CD4-positive, alpha-beta T cell (primary cell): ENCODE measurements at regions of chr20 and their contacts with region 1.

Region 1: DNA sequence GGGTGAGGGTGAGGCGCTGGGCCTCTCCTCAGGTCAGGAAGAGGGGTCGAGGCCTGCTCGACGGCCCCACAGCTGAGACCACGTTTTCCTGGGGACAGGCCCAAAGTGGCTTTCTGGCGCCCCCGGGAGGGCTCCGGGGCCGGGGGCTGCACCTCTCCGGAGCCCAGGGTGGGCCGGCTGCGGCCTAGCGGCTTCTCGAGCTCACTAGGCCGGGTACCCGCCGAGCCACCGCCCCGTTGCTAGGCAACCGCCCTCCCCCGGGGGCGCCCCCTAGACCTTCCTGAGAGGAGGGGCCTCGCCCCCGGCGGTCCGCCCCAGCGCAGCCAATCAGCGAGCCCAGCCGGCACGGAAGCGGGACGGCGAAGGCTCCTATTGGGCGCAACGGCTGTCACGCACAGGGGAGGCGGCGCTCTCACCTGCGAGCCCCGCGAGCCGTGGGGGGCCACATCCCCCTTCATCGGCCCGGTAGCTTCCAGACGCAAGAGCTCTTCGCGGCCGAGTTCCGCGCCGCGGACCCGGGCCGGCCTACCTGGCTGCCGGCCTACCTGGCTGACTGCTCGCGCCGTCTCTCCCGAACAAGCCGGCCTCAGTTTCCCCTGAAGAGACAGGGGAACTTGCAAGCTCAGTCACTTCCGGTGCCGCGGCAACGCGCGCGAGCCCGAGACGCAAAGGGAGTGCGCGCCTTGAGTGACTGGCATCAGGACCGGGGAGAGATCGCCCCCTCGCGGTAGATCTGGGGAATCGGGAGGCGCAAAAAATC is 831 bp upstream of the BCL2L1 start:
- DNase-seq: peak; percentile 91 to 99 (median 97)
- ATAC-seq: peak; percentile 92
- H3K4me3 ChIP-seq: peak overlapping the region; percentile 99
- H3K4me3 Mint-ChIP-seq: peak overlapping the region; percentile 97
- H3K27ac ChIP-seq: peak overlapping the region; percentile 92 to 96
- H3K27ac Mint-ChIP-seq: peak overlapping the region; percentile 87
- H3K4me1 ChIP-seq: peaks cover 44% of the 10 kb centered on the region
- H3K4me1 Mint-ChIP-seq: peaks cover 44% of the 10 kb centered on the region
- H3K27me3 ChIP-seq: no peaks in the 10 kb centered on the region
- H3K27me3 Mint-ChIP-seq: no peaks in the 10 kb centered on the region
- CTCF ChIP-seq: peak; percentile 85

Region 2: GRCh38 chr20:31514159-31515071 is 209.1 kb before region 1 on chr20 and contains the start of gene HM13:
- CTCF ChIA-PET with region 1: interaction called, 3 read pairs
- POLR2A ChIA-PET with region 1: no interaction called
- intact Hi-C with region 1: loop called in 1 of 2 experiments (anchors 2 kb)
- DNase-seq: peak; percentile 81 to 96 (median 86)
- ATAC-seq: peak; percentile 82
- H3K4me3 ChIP-seq: peak within 1 kb of the TSS; percentile 99
- H3K4me3 Mint-ChIP-seq: no peak within 1 kb of the TSS
- H3K27ac ChIP-seq: peak within 1 kb of the TSS; percentile 37 to 69
- H3K27ac Mint-ChIP-seq: no peak within 1 kb of the TSS
- H3K4me1 ChIP-seq: peaks cover 46% of the 10 kb centered on the region
- H3K4me1 Mint-ChIP-seq: peaks cover 7% of the 10 kb centered on the region
- H3K27me3 ChIP-seq: no peaks in the 10 kb centered on the region
- H3K27me3 Mint-ChIP-seq: no peaks in the 10 kb centered on the region
- CTCF ChIP-seq: peak; percentile 95
- total RNA-seq, gene HM13: 97.8 to 113 TPM

Region 3: GRCh38 chr20:31572701-31573554 is 150.6 kb before region 1 on chr20:
- CTCF ChIA-PET with region 1: interaction called, 4 read pairs
- POLR2A ChIA-PET with region 1: interaction called, 10 read pairs
- intact Hi-C with region 1: loop called in 1 of 2 experiments (anchors 5 kb)
- DNase-seq: peak; percentile 75 to 94 (median 85)
- ATAC-seq: peak; percentile 89
- H3K4me3 ChIP-seq: peak overlapping the region; percentile 74
- H3K4me3 Mint-ChIP-seq: peak overlapping the region; percentile 90
- H3K27ac ChIP-seq: peak overlapping the region; percentile 37 to 76
- H3K27ac Mint-ChIP-seq: peak overlapping the region; percentile 89
- H3K4me1 ChIP-seq: peaks cover 20% of the 10 kb centered on the region
- H3K4me1 Mint-ChIP-seq: peaks cover 26% of the 10 kb centered on the region
- H3K27me3 ChIP-seq: no peaks in the 10 kb centered on the region
- H3K27me3 Mint-ChIP-seq: no peaks in the 10 kb centered on the region
- CTCF ChIP-seq: no peak

Region 4: DNA sequence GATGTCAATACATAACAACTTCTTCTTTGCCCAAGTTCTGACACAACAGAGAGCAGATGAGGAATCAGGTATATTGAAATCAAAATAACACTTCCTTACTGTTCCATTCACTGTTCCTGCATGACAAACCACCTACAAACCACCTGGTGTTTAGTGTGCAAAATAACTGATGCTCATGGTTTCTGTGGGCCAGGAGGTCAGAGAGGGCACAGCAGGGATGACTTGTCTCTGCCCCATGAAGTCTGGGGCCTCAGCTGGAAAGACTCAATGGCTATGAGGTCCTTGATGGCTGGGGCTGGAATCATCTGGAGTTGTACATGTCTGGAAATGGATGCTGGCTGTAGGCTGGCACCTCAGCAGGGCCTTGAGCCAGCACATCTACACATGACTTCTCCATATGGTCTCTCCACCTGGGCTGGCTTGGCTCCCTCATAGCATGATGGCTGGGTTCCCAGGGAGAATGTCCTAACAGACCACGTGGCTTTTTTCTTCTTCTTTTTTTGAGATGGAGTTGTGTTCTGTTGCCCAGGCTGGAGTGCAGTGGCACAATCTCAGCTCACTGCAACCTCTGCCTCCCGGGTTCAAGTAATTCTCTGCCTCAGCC is 93.2 kb before region 1 on chr20:
- CTCF ChIA-PET with region 1: interaction called, 10 read pairs
- POLR2A ChIA-PET with region 1: interaction called, 5 read pairs
- intact Hi-C with region 1: loop called in 1 of 2 experiments (anchors 1 kb)
- DNase-seq: no peak
- ATAC-seq: no peak
- H3K4me3 ChIP-seq: no peak overlapping the region
- H3K4me3 Mint-ChIP-seq: no peak overlapping the region
- H3K27ac ChIP-seq: no peak overlapping the region
- H3K27ac Mint-ChIP-seq: no peak overlapping the region
- H3K4me1 ChIP-seq: peaks cover 2% of the 10 kb centered on the region
- H3K4me1 Mint-ChIP-seq: no peaks in the 10 kb centered on the region
- H3K27me3 ChIP-seq: no peaks in the 10 kb centered on the region
- H3K27me3 Mint-ChIP-seq: no peaks in the 10 kb centered on the region
- CTCF ChIP-seq: no peak

Region 5: DNA sequence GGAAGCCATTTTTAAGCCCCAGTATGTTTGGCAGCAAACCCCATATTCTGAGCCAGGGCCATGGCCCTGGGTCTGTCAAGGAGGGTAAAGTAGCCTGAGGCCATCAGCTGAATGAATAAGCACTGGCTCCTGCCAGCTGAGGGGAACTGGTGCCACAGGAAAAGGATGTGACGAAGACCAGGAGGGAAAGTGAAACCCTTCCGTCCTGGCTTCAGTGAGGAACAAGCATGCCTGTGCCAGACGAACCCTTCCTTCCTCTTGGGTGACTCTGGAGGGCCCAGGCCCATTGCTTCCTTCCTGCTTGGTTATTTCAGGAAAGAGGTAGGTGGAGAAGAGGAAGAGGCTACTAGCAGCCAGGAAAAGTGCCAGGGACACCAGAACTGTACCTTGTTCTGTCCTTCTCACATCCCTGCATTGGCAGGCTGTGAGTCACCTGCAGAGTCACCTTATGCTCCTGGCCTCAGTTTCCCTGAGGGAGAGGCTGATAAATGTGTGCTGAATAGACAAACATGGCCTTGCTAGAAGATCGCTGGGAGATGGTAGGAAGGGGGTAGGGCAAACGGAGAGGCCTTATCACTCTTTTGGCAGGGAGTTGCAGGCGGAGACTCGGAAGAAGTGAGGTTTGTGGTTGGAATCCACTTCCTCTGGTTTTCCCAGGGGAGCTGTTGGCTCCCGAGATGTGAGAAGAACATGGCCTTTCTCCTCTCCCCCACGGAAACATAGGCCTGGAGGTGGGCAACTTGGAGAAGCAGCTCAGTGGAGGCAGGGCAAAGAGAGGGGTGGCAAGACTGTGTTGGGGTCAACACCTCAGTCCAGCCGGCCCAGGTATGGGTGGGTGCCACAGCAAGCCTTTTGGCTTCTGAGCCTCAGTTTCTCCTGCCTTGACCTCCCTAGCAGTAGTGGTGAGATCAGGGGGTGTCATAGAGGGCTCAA is 48.3 kb before region 1 on chr20:
- CTCF ChIA-PET with region 1: interaction called, 21 read pairs
- POLR2A ChIA-PET with region 1: interaction called, 91 read pairs
- intact Hi-C with region 1: loop called (anchors 5 kb)
- DNase-seq: peak; percentile 33 to 89 (median 50)
- ATAC-seq: peak; percentile 86
- H3K4me3 ChIP-seq: peak overlapping the region; percentile 62
- H3K4me3 Mint-ChIP-seq: peak overlapping the region; percentile 96
- H3K27ac ChIP-seq: peak overlapping the region; percentile 76 to 90
- H3K27ac Mint-ChIP-seq: peak overlapping the region; percentile 96
- H3K4me1 ChIP-seq: peaks cover 83% of the 10 kb centered on the region
- H3K4me1 Mint-ChIP-seq: peaks cover 67% of the 10 kb centered on the region
- H3K27me3 ChIP-seq: no peaks in the 10 kb centered on the region
- H3K27me3 Mint-ChIP-seq: no peaks in the 10 kb centered on the region
- CTCF ChIP-seq: no peak

Region 6: DNA sequence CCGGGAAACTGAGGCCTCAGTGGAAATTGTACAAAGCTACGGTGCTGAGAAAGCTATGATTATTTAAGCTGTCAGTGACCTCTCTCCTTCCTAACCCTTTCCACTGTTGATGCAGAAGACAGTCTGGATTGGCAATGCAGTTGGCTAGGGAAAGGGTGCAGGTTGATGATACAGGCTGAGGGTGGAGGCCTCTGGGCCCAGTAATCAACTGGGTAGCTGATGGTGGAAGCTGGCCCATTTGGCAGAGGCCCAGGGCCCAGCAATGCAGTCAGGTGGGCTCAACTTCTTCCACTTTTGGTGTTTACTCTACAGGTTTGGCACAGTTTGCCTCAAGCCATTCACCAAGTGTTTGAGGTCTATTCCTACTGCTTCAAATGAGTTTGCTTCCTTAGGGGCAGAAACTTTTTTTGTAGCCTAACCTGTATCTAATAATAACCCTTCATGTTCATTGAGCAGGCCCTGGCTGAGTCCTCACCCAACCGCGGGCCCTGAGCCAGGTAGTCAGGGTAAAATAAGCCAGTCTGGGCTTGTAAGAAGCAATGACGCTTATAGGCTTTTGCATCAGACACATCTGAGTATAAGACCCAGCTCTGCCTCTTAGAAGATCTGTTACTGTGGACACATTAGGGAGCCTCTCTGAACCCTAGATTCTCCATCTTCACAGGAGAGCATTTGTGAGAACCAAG is 12.9 kb before region 1 on chr20:
- CTCF ChIA-PET with region 1: interaction called, 5 read pairs
- POLR2A ChIA-PET with region 1: interaction called, 10 read pairs
- intact Hi-C with region 1: no loop called
- DNase-seq: no peak
- ATAC-seq: no peak
- H3K4me3 ChIP-seq: no peak overlapping the region
- H3K4me3 Mint-ChIP-seq: no peak overlapping the region
- H3K27ac ChIP-seq: no peak overlapping the region
- H3K27ac Mint-ChIP-seq: peak overlapping the region; percentile 72
- H3K4me1 ChIP-seq: peaks cover 55% of the 10 kb centered on the region
- H3K4me1 Mint-ChIP-seq: peaks cover 79% of the 10 kb centered on the region
- H3K27me3 ChIP-seq: no peaks in the 10 kb centered on the region
- H3K27me3 Mint-ChIP-seq: no peaks in the 10 kb centered on the region
- CTCF ChIP-seq: no peak